ENCODE measurements at regions of chr9 and their contacts with region 1.

Region 1: DNA sequence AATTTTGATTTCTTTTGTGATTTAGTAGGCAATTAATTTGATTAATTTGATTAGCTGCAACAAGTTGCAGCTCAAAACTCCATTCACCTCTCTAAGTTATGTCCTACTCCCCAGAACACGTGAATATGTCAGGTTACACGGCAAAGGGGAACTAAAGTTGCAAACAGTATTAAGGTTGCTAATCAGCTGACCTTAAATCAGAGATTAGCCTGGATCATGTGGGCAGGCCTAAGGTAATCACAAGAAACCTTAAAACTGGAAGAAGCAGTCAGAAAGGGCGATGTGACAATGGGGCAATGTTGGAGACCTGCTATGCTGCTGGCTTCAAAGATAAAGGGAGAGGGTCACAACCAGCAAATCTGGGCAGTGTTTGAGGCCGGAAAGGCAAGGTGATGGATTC is 47.3 kb upstream of the ANXA1 start:
- DNase-seq: no peak

Region 2: DNA sequence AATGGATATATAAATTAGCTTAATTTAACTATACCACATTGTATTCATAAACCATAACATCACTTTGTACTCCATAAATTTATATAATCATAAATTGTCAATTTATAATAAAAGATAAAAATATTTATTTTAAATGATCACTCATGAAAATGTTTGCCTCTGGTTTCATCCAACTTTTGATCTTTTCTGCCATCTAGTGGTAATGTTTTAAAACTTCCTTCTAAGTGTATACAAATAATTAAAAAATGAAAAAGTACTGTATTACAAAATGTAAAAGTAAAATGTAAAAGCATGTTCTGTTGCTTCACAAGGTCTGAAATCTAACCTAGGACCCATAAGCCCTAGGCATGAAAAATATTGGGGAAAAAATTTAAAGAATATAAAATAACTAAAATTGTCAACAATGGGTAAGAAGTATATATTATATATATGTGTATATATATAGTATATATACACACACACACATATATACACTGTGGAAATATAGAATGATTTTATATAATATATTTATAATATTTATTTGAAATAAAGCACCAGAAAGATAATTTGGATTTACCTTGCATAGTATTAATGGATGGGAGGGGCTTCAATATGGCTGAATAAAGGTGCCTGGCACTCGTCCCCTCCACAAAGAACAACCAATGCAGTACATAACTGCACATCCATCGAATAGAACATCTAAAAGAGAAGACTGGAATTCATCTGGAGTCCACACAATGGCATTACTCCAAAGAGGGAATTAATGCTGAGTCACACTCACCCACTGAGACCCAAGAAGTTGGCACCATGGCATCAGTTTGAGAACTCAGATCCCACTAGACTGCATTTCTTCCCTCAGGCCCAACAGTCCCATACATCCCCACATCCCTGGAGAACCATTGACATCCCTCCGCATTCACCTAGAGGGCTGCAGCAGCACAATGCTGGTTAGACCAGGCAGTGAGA is 79.8 kb after region 1 on chr9:
- intact Hi-C with region 1: loop called (anchors 2 kb)
- DNase-seq: no peak